A673 (cell line): ENCODE measurements at regions of chr2 and their contacts with region 1.

Region 1: DNA sequence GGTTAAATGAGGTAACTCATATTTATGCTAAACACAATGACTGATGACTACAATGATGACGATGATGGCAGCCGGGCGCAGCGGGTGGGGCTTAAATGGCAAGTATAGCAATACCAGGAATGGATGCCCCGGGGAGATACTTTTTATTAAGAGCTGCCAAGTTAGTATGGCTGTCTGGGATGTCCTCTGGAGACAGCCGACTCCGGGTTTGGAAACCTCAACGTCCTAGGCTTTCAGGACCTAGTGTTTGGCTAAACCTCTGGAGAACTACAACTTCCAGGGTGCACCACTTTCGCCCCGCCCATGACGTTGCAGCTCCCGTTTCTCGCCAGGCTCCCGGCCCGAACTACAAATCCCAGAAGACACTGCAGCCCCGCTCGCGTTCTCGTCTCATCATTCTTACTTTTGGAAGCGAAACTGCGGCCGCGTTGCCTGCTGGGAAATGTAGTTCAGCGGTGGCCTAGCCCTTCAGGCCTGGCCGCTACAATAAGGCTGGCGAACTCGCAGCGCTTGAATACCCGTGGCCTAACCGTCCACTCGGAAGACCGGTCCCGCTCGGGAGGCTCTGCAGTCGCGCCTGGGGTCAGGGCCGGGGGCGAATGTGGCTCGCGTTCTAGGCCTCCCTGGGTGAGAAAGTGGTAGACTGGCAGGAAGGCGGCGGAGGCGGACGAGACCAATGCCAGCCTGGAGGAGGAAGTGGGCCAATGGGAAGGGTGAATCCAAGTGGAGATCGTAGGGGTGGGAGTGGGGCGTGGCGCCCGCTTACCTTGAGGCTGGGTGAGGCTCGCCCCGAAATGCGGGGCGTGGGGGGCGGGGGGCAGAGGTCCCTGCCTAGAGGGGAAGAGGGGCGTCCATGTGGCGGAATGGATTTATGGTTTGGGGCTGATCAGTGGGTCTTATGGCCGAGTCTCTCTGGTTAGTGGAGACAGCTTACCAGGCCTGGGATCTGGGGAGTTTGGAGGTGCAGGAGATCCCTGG is at the start of gene SMARCAL1:
- DNase-seq: peak; percentile 99
- H3K4me3 ChIP-seq: peak within 1 kb of the TSS; percentile 78
- H3K27ac ChIP-seq: peak within 1 kb of the TSS; percentile 97
- H3K4me1 ChIP-seq: no peaks in the 10 kb centered on the region
- H3K27me3 ChIP-seq: no peaks in the 10 kb centered on the region
- CTCF ChIP-seq: no peak
- total RNA-seq, gene SMARCAL1: 20.7 and 21.4 TPM in 2 replicates

Region 2: GRCh38 chr2:215961981-215962380 is 450.3 kb before region 1 on chr2:
- CTCF ChIA-PET with region 1: no interaction called
- POLR2A ChIA-PET with region 1: no interaction called
- intact Hi-C with region 1: no loop called
- DNase-seq: no peak
- H3K4me3 ChIP-seq: no peak overlapping the region
- H3K27ac ChIP-seq: no peak overlapping the region
- H3K4me1 ChIP-seq: peaks cover 3% of the 10 kb centered on the region
- H3K27me3 ChIP-seq: no peaks in the 10 kb centered on the region
- CTCF ChIP-seq: no peak

Region 3: GRCh38 chr2:216328347-216328746 is 84.0 kb before region 1 on chr2:
- CTCF ChIA-PET with region 1: no interaction called
- POLR2A ChIA-PET with region 1: no interaction called
- intact Hi-C with region 1: loop called (anchors 5 kb)
- DNase-seq: peak; percentile 45
- H3K4me3 ChIP-seq: no peak overlapping the region
- H3K27ac ChIP-seq: no peak overlapping the region
- H3K4me1 ChIP-seq: no peaks in the 10 kb centered on the region
- H3K27me3 ChIP-seq: no peaks in the 10 kb centered on the region
- CTCF ChIP-seq: peak; percentile 53

Region 4: DNA sequence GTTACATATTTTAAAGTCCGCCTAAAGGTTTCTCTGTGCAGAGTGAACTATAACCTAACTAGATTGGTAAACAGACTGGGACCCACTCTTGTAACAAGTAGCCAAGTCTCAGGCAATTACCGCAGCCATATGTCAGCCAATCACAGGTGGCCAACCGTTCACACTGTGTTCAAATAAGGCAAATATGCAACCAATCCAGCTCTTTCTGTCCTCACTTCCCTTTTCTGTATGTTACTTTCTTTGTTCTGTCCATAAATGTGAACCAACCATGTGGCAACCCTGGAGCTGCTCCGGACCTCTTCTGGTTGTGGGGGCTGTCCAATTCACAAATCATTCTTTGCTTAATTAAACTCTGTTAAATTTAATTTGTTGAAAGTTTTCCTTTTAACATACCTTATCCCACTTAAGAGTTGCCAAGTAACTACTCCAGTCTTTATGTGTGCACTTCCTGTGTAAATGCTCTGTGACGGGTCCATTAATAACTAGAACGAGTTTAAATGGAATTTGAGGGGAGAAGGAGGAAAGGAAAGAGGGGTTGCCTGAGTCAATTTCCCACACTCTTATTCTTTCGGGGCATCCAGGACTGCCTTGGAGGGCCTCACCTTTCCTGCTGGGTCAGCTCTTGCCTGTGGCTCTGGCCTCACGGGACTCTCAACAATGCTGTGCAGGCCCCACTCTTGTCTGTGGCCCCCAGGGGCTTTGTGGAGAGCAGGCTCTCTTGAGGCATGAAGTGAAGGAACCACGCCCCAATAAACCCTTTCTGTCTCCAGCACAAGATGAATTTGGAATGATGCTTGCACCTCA is 79.7 kb after region 1 on chr2:
- CTCF ChIA-PET with region 1: no interaction called
- POLR2A ChIA-PET with region 1: no interaction called
- intact Hi-C with region 1: loop called (anchors 1 kb)
- DNase-seq: peak; percentile 68
- H3K4me3 ChIP-seq: no peak overlapping the region
- H3K27ac ChIP-seq: peak overlapping the region; percentile 40
- H3K4me1 ChIP-seq: peaks cover 27% of the 10 kb centered on the region
- H3K27me3 ChIP-seq: no peaks in the 10 kb centered on the region
- CTCF ChIP-seq: no peak

Region 5: GRCh38 chr2:216533609-216534008 is 121.3 kb after region 1 on chr2:
- CTCF ChIA-PET with region 1: no interaction called
- POLR2A ChIA-PET with region 1: no interaction called
- intact Hi-C with region 1: no loop called
- DNase-seq: no peak
- H3K4me3 ChIP-seq: no peak overlapping the region
- H3K27ac ChIP-seq: peak overlapping the region; percentile 60
- H3K4me1 ChIP-seq: peaks cover 45% of the 10 kb centered on the region
- H3K27me3 ChIP-seq: no peaks in the 10 kb centered on the region
- CTCF ChIP-seq: no peak

Region 6: GRCh38 chr2:216560838-216561270 is 148.5 kb after region 1 on chr2:
- CTCF ChIA-PET with region 1: no interaction called
- POLR2A ChIA-PET with region 1: no interaction called
- intact Hi-C with region 1: no loop called
- DNase-seq: no peak
- H3K4me3 ChIP-seq: no peak overlapping the region
- H3K27ac ChIP-seq: no peak overlapping the region
- H3K4me1 ChIP-seq: peaks cover 15% of the 10 kb centered on the region
- H3K27me3 ChIP-seq: no peaks in the 10 kb centered on the region
- CTCF ChIP-seq: no peak

Region 7: DNA sequence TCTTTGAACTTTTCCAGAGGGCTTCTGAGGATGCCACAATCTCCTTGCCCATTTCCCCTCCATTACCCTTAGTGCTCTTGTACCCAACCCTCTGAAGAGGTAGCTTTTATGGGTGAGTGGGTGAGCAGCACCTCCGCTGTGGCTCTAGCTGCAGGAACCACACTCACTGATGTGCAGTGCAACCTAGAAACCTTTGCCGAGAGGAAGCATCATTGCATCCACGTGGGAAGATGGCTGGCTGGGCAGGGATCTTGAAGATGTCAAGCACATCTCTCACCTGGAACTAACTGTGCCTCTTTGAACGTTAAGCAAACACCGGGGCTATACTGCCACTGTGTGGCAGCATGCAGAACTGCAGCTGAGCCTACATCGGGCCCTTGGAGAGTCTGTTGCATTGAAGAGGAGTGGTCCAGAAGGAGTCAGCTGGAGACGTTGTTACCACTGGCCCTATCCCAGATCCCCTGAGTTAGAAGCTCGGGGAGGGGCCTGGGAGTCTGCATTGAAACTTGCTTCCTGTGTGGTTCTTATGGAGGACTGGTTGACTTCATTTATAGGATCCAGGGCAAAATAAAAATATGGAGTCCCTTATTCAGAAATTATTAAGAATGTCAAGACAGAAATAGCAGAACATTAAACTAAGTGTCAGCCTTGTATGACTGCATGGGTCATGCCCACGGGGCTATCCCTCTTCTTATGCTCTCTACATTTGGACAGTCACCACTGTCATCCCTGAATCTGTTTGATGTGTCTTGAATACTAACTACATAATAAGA is 254.3 kb after region 1 on chr2:
- CTCF ChIA-PET with region 1: no interaction called
- POLR2A ChIA-PET with region 1: no interaction called
- intact Hi-C with region 1: loop called (anchors 5 kb)
- DNase-seq: peak; percentile 82
- H3K4me3 ChIP-seq: no peak overlapping the region
- H3K27ac ChIP-seq: no peak overlapping the region
- H3K4me1 ChIP-seq: peaks cover 12% of the 10 kb centered on the region
- H3K27me3 ChIP-seq: no peaks in the 10 kb centered on the region
- CTCF ChIP-seq: peak; percentile 99